ENCODE measurements at regions of chr5 and their contacts with region 1.

Region 1: GRCh38 chr5:145908205-145908945 is 28.0 kb upstream of the SH3RF2 start:
- H3K4me3 ChIP-seq: no peak overlapping the region
- H3K27ac ChIP-seq: no peak overlapping the region
- H3K4me1 ChIP-seq: no peaks in the 10 kb centered on the region
- CTCF ChIP-seq: 0 out of 2 replicates have a peak, but pooled peaks have one; percentile 7

Region 2: GRCh38 chr5:145946112-145946861 is 37.9 kb after region 1 on chr5:
- CTCF ChIA-PET with region 1: interaction called, 13 read pairs
- POLR2A ChIA-PET with region 1: no interaction called
- H3K4me3 ChIP-seq: no peak overlapping the region
- H3K27ac ChIP-seq: peak overlapping the region; percentile 57
- H3K4me1 ChIP-seq: peaks cover 24% of the 10 kb centered on the region
- CTCF ChIP-seq: no peak

Region 3: GRCh38 chr5:146041180-146041789 is 132.9 kb after region 1 on chr5:
- CTCF ChIA-PET with region 1: interaction called, 12 read pairs
- POLR2A ChIA-PET with region 1: no interaction called
- H3K4me3 ChIP-seq: no peak overlapping the region
- H3K27ac ChIP-seq: no peak overlapping the region
- H3K4me1 ChIP-seq: no peaks in the 10 kb centered on the region
- CTCF ChIP-seq: no peak

Region 4: GRCh38 chr5:146049014-146049703 is 140.8 kb after region 1 on chr5:
- CTCF ChIA-PET with region 1: interaction called, 45 read pairs
- POLR2A ChIA-PET with region 1: no interaction called
- H3K4me3 ChIP-seq: no peak overlapping the region
- H3K27ac ChIP-seq: no peak overlapping the region
- H3K4me1 ChIP-seq: peaks cover 2% of the 10 kb centered on the region; the same call in 1 of the 2 replicates
- CTCF ChIP-seq: peak; percentile 80

Region 5: GRCh38 chr5:146233441-146233840 is 325.1 kb after region 1 on chr5:
- CTCF ChIA-PET with region 1: no interaction called
- POLR2A ChIA-PET with region 1: no interaction called
- H3K4me3 ChIP-seq: no peak overlapping the region
- H3K27ac ChIP-seq: no peak overlapping the region
- H3K4me1 ChIP-seq: no peaks in the 10 kb centered on the region
- CTCF ChIP-seq: no peak

Measured in HEK293 (cell line).